Cardiac septum (tissue), 1 donor: ENCODE measurements at regions of chr1 and their contacts with region 1.

Region 1: DNA sequence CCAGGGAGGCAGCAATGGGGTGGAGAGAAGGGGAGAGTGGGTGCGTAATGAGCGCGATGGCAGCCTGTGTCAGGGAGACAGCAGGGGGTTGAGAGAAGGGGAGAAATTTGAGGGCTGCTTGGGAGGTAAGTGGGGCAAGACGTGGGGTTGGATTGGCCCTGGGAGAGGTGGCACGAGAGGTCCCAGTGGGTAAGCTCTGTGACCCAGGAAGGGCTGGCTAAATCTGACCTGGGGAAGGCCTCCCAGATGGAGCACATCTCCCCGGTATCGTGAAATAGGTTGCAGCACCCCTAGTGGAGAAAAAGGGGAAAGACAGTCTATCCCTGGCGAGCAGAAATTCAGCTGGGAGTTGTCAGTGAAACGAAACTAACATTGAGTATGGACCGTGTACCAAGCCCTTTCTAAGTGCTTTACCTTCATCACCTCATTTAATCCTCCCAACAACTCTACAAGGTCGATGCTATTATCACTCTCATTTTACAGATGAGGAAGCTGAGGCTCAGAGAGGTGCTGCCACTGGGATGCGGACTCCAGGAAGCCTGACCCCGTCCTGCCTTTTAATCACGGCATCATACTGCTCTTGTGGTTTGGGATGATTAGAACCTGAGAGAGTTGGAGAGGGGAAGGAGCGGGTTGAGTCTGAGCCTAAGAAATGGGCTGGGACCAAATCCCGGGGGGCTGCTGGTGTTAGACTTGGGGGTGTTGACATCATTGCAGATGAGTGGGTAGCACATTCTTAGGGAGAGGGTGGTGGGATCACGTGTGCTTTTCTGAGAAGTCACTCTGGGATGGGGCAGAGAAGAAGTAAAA is 56.6 kb upstream of the RPL11 start:
- DNase-seq: no peak

Region 2: DNA sequence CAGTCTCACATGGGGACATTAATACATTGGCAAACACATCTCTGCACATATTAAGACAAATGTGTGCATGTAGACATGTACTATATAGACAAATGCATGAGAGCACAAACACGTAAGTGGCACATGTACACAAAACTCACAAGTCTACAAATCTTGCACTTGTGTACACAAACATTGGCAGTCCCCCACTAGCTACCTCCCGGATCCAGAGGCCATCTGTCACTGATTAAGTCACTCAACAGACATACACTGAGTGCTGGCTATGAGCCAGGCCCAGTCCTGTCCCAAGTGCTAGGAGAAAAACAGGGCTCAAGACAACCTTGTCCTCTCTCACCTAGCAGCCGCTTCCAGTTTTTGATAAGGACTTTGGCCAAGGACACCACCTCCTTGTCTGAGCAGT is 217.5 kb before region 1 on chr1:
- intact Hi-C with region 1: no loop called
- DNase-seq: no peak

Region 3: DNA sequence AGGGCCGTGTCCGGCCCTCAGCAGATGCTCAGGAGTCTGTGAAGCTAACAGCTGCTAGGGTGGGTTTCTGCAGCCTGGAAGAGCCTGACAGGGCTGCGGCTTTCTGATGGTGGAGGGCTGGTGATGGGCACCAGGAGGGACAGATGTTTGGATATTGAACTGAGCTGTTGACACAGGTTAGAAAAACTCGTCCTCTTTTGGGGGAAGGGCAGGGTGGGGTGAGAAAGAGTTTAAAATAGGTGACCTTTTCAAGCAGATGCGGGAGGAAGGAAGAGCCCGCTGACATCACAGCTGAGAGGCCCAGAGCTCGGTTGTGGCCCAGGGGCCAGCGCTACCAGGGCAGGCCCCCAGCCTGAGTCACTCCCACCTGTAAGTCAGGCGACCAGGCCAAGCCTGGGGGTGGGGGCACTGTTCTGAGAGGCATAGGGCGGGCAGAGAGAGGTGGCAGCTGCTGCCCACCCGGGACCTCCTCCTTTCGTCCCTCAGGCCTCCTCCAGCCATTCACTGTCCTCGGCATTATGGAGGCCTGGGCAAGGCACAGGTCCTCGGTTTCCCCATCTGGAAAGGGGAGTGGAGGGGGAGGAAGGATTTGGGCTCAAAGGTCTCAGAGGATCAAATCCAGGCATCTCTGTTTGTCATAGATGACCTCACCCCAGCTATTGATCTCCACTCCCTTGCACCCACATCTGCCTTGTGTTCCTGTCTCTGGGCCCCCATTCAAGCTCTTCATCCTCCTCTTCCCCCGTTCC is 43.4 kb before region 1 on chr1:
- intact Hi-C with region 1: loop called (anchors 5 kb)
- DNase-seq: no peak

Region 4: GRCh38 chr1:23867953-23868556 is 233.0 kb after region 1 on chr1 and contains the start of gene FUCA1:
- intact Hi-C with region 1: no loop called
- DNase-seq: peak; percentile 96
- total RNA-seq, gene FUCA1: 13.3 TPM